ENCODE measurements at regions of chr7 and their contacts with region 1.

Region 1: GRCh38 chr7:74289659-74290514 is 680 bp downstream of the CLIP2 start:
- DNase-seq: no peak
- H3K4me3 Mint-ChIP-seq: peak overlapping the region; percentile 68
- H3K27ac Mint-ChIP-seq: peak overlapping the region; percentile 24
- H3K4me1 Mint-ChIP-seq: peaks cover 58% of the 10 kb centered on the region
- H3K27me3 Mint-ChIP-seq: no peaks in the 10 kb centered on the region
- CTCF ChIP-seq: no peak

Region 2: GRCh38 chr7:74269757-74270277 is 20.1 kb before region 1 on chr7:
- CTCF ChIA-PET with region 1: interaction called, 8 read pairs
- intact Hi-C with region 1: loop called (anchors 1 kb)
- DNase-seq: peak; percentile 63
- H3K4me3 Mint-ChIP-seq: peak overlapping the region; percentile 30
- H3K27ac Mint-ChIP-seq: no peak overlapping the region
- H3K4me1 Mint-ChIP-seq: peaks cover 9% of the 10 kb centered on the region
- H3K27me3 Mint-ChIP-seq: no peaks in the 10 kb centered on the region
- CTCF ChIP-seq: no peak

Region 3: DNA sequence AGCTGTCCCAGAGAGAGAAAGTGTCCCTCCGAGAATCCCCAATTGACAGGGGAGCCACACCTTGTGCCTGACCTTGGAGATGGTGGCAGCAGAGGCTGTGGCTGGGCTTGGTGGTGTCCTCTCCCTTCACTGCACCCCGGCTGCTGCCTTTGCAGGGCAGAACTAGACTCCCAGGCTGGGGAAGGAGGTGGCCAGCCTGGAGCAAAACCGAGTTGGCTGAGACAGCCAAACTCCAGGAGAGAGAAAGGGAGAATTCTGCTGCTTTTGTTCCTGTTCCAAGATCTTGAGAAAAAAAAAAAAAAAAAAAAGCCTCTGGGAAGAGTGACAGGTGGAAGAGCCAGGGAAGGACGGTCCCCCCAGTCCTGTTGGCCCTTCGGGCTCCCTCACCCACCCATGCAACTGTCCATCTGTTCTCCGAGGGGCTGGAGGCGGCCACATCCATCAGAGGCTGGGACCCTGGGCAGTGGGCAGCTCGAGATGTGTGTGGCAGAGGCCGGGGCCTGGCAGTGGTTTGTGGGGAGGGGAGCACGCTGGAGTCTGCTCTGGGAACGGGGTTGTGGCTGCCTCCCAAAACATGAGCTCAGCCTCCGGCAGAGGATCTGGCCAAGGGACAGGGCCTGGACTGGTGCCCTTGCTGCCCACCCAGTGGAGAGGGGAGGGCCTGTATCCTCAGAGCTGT is 34.8 kb after region 1 on chr7:
- CTCF ChIA-PET with region 1: interaction called, 10 read pairs
- intact Hi-C with region 1: no loop called
- DNase-seq: no peak
- H3K4me3 Mint-ChIP-seq: no peak overlapping the region
- H3K27ac Mint-ChIP-seq: no peak overlapping the region
- H3K4me1 Mint-ChIP-seq: peaks cover 10% of the 10 kb centered on the region
- H3K27me3 Mint-ChIP-seq: no peaks in the 10 kb centered on the region
- CTCF ChIP-seq: no peak

Region 4: DNA sequence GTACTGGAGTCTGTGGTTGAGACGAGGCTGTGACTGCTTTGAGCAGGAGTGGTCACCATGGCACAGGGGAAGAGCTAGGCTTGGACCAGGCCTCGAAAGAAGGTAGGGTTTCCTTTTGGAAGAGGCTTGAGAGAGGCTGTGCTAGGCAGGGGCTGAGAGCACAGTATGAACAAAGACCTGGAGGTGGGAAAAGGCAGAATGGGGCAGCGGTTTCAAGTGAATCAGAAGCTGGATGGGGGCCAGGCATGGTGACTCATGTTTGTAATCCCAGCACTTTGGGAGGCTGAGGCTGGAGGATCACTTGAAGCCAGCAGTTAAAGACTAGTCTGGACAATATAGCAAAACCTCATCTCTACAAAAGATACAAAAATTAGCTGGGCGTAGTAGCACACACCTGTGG is 65.2 kb after region 1 on chr7:
- CTCF ChIA-PET with region 1: no interaction called
- intact Hi-C with region 1: loop called (anchors 10 kb)
- DNase-seq: peak; percentile 77
- H3K4me3 Mint-ChIP-seq: no peak overlapping the region
- H3K27ac Mint-ChIP-seq: no peak overlapping the region
- H3K4me1 Mint-ChIP-seq: peaks cover 9% of the 10 kb centered on the region
- H3K27me3 Mint-ChIP-seq: no peaks in the 10 kb centered on the region
- CTCF ChIP-seq: no peak